Endothelial cell of umbilical vein (primary cell): ENCODE measurements at regions of chr19 and their contacts with region 1.

Region 1: DNA sequence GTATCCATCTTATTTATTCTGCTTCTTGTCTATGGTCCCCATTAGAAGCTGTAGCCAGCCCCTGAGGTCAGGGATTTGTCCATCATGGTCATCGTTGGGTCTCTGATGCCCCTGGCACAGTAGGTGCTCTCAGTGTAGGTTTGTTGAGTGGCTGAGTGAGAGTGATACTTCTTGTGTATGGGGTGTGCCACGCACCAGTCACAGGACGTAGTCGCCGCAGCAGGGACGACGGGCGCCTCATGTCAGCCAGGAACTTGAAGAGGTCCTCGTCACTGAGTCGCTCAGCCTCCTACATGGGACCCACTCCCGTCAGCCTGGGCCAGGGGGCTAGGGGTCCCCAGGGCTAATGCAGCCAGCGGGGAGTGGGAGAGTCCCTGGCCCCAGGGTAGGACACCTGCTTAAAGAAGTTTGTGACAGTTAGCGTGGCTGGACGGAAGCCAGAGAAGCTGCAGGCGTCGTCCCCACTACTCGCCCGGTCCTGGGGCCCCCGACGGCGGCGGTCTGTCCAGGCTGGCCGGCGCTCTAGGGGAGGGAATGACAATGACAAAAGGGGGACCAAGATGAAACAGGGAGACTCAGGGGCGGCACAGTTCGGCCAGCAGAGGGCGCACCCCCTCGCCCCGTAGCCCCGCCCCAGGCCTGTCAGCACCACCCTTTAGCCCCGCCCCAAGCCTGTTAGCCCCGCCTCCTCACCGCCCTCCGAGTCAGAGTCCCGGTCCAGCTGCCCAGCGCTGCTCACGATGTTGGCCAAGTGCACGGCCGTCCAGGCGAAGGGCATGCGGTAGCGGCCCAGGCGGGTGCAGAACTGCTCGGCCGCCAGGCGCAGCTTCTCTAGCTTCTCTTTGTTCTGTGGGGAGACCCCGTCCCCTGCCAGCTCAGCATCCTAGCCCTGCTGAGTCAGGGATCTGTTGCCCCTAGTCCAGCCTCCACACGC is 3.7 kb downstream of the ANGPTL8 start:
- DNase-seq: peak; percentile 90
- H3K4me3 ChIP-seq: no peak overlapping the region
- H3K27ac ChIP-seq: no peak overlapping the region
- H3K4me1 ChIP-seq: peaks cover 5% of the 10 kb centered on the region
- H3K27me3 ChIP-seq: no peaks in the 10 kb centered on the region
- CTCF ChIP-seq: peak; percentile 72 to 93
- POLR2A ChIP-seq: peak; percentile 73

Region 2: DNA sequence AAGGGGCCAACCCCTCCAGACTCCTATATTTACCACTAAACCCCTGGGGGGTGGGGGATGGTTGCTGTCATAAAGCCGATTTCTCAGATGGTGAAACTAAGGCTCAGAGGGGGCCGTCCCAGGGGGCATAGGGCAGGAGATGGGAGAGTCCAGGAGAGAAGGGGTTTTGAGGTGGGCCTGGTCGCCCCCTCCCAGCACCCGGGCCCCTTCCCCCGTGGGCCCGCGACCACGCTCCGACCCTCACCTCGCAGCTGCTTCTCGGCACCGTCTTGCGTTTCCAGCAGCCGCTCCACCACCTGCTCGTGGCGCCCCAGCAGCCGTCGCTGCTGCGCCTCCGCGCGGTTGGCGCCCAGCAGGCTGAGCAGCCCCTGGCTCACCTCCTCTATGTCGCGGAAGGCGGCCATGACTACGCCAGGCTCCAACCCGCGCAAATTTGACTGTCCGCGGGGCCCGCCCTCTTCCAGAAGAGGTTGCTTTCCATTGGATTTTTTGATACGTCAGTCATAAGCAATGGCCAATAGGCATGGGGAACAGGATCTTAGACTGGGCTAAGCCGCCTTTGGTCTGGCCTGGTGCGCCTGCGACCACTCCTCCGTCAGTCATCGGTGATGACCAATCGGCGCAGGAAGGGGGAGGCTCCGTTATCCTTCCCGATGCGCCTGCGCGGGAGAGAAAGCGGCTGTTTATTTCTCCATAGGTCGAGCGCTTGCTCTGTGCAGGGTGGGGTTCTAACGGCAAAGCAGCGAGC is 87.6 kb before region 1 on chr19 and contains the start of gene SPC24:
- CTCF ChIA-PET with region 1: no interaction called
- POLR2A ChIA-PET with region 1: no interaction called
- dilution Hi-C with region 1: no loop called
- intact Hi-C with region 1: no loop called
- DNase-seq: peak; percentile 99
- H3K4me3 ChIP-seq: peak within 1 kb of the TSS; percentile 73 to 97 (median 94)
- H3K27ac ChIP-seq: peak within 1 kb of the TSS; percentile 75
- H3K4me1 ChIP-seq: peaks cover 28% of the 10 kb centered on the region
- H3K27me3 ChIP-seq: no peaks in the 10 kb centered on the region
- CTCF ChIP-seq: no peak
- POLR2A ChIP-seq: peak; percentile 55
- total RNA-seq, gene SPC24: 68.5 and 70.0 TPM in 2 replicates

Region 3: GRCh38 chr19:11256189-11256588 is 13.1 kb after region 1 on chr19:
- CTCF ChIA-PET with region 1: interaction called, 13 read pairs
- POLR2A ChIA-PET with region 1: interaction called, 3 read pairs
- dilution Hi-C with region 1: no loop called
- intact Hi-C with region 1: loop called (anchors 1 kb)
- DNase-seq: peak; percentile 60
- H3K4me3 ChIP-seq: no peak overlapping the region
- H3K27ac ChIP-seq: no peak overlapping the region
- H3K4me1 ChIP-seq: peaks cover 28% of the 10 kb centered on the region
- H3K27me3 ChIP-seq: no peaks in the 10 kb centered on the region
- CTCF ChIP-seq: no peak
- POLR2A ChIP-seq: no peak

Region 4: DNA sequence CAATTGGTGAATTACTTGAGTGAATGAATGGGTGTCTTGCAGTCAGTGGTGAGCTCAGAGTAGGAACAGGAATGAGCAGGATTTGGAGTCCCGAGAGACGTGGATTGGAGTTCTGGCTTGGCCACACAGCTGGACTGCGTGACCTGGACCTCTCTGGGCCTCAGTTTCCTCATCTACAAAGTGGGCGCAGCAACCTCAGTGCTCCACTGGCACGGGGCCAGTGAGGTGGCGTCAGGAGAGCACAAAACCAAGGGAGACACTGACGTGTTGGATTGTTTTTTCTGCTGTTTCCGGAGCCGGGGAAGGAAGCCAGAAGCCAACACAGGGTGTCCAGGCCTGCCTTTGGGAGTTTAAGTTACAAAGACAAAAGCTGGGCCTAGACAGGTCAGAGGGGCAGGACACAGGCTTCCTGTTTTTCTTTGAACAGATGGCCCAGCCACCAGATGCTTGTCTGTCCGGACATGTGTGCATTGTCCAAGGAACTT is 25.7 kb after region 1 on chr19:
- CTCF ChIA-PET with region 1: interaction called, 19 read pairs
- POLR2A ChIA-PET with region 1: no interaction called
- dilution Hi-C with region 1: no loop called
- intact Hi-C with region 1: loop called (anchors 2 kb)
- DNase-seq: peak; percentile 100
- H3K4me3 ChIP-seq: no peak overlapping the region
- H3K27ac ChIP-seq: peak overlapping the region; percentile 99
- H3K4me1 ChIP-seq: peaks cover 47% of the 10 kb centered on the region
- H3K27me3 ChIP-seq: no peaks in the 10 kb centered on the region
- CTCF ChIP-seq: no peak
- POLR2A ChIP-seq: peak; percentile 89

Region 5: GRCh38 chr19:11288343-11288742 is 45.2 kb after region 1 on chr19:
- CTCF ChIA-PET with region 1: interaction called, 49 read pairs
- POLR2A ChIA-PET with region 1: no interaction called
- dilution Hi-C with region 1: no loop called
- intact Hi-C with region 1: loop called (anchors 1 kb)
- DNase-seq: peak; percentile 38
- H3K4me3 ChIP-seq: no peak overlapping the region
- H3K27ac ChIP-seq: no peak overlapping the region
- H3K4me1 ChIP-seq: peaks cover 11% of the 10 kb centered on the region
- H3K27me3 ChIP-seq: no peaks in the 10 kb centered on the region
- CTCF ChIP-seq: peak; percentile 38 to 54
- POLR2A ChIP-seq: no peak

Region 6: GRCh38 chr19:11446652-11447301 is 203.6 kb after region 1 on chr19:
- CTCF ChIA-PET with region 1: interaction called, 4 read pairs
- POLR2A ChIA-PET with region 1: no interaction called
- dilution Hi-C with region 1: no loop called
- intact Hi-C with region 1: loop called (anchors 1 kb)
- DNase-seq: peak; percentile 21
- H3K4me3 ChIP-seq: no peak overlapping the region
- H3K27ac ChIP-seq: no peak overlapping the region
- H3K4me1 ChIP-seq: no peaks in the 10 kb centered on the region
- H3K27me3 ChIP-seq: no peaks in the 10 kb centered on the region
- CTCF ChIP-seq: peak; percentile 74 to 78
- POLR2A ChIP-seq: no peak

Region 7: DNA sequence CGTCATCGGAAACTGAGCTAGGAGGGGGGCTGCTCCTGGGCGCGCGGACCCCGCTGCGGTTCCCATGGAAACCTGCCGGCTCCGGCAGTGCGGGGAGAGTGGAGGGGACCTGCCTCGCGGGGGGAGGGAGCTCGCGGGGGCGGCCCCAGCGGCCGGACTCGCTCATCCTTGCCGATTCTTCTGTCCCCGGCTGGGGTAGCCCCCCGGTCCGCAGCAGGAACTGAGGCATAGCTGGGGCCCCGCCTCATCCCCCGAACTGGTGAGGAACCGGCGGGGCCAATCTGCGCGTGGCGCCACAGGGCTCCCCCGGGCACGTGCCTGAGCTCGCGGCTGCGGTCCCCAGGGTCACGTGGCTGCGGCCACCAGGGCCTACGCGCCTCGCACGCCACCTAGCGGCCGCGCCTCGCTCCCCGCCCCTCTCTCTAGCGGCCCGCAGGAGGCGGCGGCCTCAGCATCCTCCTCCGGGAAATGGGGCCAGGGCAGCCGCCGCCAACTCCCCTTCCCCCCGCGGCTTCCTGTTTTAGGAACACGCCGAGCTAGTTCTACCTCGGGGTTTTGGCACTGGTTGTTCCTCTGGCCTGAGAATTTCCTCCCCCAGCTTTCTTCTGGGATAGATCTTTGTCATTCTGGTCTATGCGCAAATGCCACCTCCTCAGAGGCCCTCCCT is 239.4 kb after region 1 on chr19:
- CTCF ChIA-PET with region 1: interaction called, 14 read pairs
- POLR2A ChIA-PET with region 1: no interaction called
- dilution Hi-C with region 1: no loop called
- intact Hi-C with region 1: loop called (anchors 2 kb)
- DNase-seq: peak; percentile 78
- H3K4me3 ChIP-seq: peak overlapping the region in 1 of 3 experiments; percentile 27
- H3K27ac ChIP-seq: no peak overlapping the region
- H3K4me1 ChIP-seq: peaks cover 3% of the 10 kb centered on the region
- H3K27me3 ChIP-seq: peaks cover 13 to 25% of the 10 kb centered on the region in 2 experiments
- CTCF ChIP-seq: peak; percentile 94 to 95
- POLR2A ChIP-seq: no peak

Region 8: GRCh38 chr19:11587302-11587974 is 344.3 kb after region 1 on chr19:
- CTCF ChIA-PET with region 1: no interaction called
- POLR2A ChIA-PET with region 1: no interaction called
- dilution Hi-C with region 1: no loop called
- intact Hi-C with region 1: loop called (anchors 5 kb)
- DNase-seq: peak; percentile 65
- H3K4me3 ChIP-seq: no peak overlapping the region
- H3K27ac ChIP-seq: no peak overlapping the region
- H3K4me1 ChIP-seq: no peaks in the 10 kb centered on the region
- H3K27me3 ChIP-seq: no peaks in the 10 kb centered on the region
- CTCF ChIP-seq: peak; percentile 87 to 91
- POLR2A ChIP-seq: no peak